AG04450 (cell line): ENCODE measurements at regions of chr18 and their contacts with region 1.

Region 1: DNA sequence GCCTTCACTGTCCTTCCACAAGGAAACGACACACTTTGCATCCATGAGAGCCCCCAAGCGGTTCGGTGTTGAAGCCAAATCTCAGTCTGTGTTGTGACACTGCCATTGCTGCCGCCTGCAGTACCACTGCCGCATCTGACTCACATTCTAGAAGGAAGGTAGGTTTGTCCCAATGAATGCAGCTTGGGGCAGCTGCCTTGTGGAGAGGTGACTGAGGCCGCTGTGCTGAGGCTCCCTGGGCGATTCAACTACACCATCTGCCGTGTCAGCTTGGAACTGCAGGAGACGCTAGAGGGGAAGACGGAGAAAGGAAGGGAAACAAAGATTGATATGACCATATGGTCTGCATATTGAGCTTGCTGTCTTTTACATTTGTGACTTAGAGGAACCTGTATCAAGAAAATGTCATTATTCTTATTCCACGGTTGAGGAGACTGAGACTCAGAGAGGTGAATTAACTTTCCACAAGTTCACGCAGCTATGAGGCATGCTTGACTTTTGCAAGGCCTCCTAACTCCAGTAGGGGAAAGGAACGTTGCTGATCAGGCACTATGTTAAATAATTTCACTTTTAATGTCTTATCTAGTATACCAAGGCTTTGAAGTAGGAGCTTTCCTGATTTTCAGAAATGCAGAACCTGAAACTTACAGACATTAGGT is 43.5 kb upstream of the LMAN1 start:
- DNase-seq: peak; percentile 29
- H3K4me3 ChIP-seq: no peak overlapping the region
- H3K27ac ChIP-seq: no peak overlapping the region
- H3K27me3 ChIP-seq: no peaks in the 10 kb centered on the region
- CTCF ChIP-seq: peak; percentile 97

Region 2: DNA sequence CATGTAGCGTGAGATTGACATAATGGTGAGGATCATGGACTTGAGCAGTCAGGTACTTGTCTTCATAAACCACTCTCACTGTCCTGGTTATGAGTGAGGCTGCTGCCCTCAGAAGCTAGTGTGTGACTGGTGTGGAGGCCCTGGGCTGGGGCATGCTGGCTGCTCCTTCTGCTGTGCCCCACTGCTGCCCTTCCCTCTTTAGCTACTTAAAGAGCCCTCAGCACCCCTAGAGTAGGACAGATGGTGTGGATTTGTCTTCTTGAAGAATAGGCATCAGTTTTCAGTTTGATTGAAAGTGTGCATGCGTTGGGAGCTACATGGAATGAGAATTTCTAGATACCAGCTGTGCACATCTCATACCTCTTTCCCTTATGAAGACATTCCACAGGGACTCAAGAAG is 99.6 kb before region 1 on chr18:
- CTCF ChIA-PET with region 1: interaction called, 242 read pairs
- POLR2A ChIA-PET with region 1: no interaction called
- DNase-seq: no peak
- H3K4me3 ChIP-seq: no peak overlapping the region
- H3K27ac ChIP-seq: no peak overlapping the region
- H3K27me3 ChIP-seq: peaks cover 69% of the 10 kb centered on the region
- CTCF ChIP-seq: no peak

Region 3: DNA sequence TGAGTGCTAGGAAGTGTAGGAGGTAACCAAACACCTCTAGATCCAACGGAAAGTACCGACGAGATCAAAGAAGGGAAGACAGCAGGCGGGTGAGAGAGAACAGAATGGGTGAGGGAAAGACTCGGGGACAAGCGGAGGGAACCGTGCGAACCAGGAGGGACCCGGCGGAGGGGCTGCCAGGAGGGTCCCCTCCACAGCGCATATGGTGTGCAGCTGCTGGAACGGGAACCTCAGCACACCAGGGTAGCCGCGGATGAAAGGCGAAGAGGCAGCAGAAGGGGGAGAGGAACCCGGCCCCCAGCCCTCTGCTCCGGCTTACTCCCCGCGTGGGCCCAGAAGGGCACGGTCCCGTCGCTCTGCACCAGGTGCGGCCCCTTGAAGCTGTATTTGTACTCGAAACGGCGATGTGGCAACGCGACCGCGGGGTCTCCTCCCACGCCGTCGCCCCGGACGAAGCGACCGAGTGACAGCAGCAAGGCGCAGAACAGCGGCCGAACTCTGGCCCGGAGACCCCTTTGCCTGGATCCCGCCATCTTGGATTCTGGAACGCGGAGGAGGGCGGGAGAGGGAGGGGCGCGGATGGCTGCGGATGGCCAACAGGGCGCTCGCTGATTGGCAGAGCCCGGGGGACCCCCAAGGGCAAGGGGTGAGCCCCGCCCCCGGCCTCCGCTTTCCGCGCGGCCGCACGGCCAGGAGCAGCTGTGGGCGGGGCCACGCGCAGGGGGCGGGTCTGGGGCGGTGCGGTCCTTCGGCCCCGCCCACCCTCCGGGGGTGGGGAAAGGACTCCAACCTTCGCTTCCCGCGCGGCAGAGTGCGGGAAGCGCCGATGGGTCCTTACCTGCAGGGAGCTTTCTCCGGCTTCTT is 43.6 kb before region 1 on chr18 and contains the start of gene LMAN1:
- CTCF ChIA-PET with region 1: interaction called, 31 read pairs
- POLR2A ChIA-PET with region 1: no interaction called
- DNase-seq: peak; percentile 84
- H3K4me3 ChIP-seq: peak within 1 kb of the TSS; percentile 97
- H3K27ac ChIP-seq: peak within 1 kb of the TSS; percentile 95
- H3K27me3 ChIP-seq: peaks cover 8% of the 10 kb centered on the region
- CTCF ChIP-seq: no peak
- polyA plus RNA-seq, gene LMAN1: 110 and 159 TPM in 2 replicates

Region 4: GRCh38 chr18:59414111-59414653 is 11.6 kb after region 1 on chr18:
- CTCF ChIA-PET with region 1: interaction called, 18 read pairs
- POLR2A ChIA-PET with region 1: no interaction called
- DNase-seq: no peak
- H3K4me3 ChIP-seq: no peak overlapping the region
- H3K27ac ChIP-seq: no peak overlapping the region
- H3K27me3 ChIP-seq: peaks cover 6% of the 10 kb centered on the region
- CTCF ChIP-seq: no peak